ENCODE measurements at regions of chr11 and their contacts with region 1.

Region 1: GRCh38 chr11:25048632-25049031 is 551.8 kb downstream of the LUZP2 start:
- DNase-seq: no peak
- H3K4me3 ChIP-seq: no peak overlapping the region
- CTCF ChIP-seq: no peak
- POLR2A ChIP-seq: no peak

Region 2: GRCh38 chr11:24543786-24544185 is 504.8 kb before region 1 on chr11:
- intact Hi-C with region 1: loop called (anchors 10 kb)
- DNase-seq: no peak
- H3K4me3 ChIP-seq: no peak overlapping the region
- CTCF ChIP-seq: no peak
- POLR2A ChIP-seq: no peak

Region 3: GRCh38 chr11:24779791-24780190 is 268.8 kb before region 1 on chr11:
- intact Hi-C with region 1: no loop called
- DNase-seq: no peak
- H3K4me3 ChIP-seq: no peak overlapping the region
- CTCF ChIP-seq: no peak
- POLR2A ChIP-seq: no peak

Region 4: DNA sequence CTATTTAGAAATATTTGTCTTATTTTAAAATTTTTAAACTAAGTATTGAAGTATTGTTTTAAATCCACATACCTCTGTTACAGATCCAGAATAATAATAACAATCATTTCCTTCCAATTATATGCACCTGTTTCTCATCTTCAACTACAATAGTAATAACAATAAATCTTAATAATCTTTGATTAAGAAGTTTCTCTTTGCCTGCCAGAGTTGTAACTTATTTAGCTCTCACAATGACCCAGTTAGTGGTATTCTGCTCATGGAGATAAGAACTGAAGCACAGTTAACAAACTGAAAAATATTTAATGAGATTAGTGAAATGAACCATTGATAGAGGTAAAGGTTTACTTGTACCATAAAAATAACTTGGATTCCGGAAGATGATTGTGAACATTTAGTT is 244.5 kb after region 1 on chr11:
- intact Hi-C with region 1: no loop called
- DNase-seq: no peak
- H3K4me3 ChIP-seq: no peak overlapping the region
- CTCF ChIP-seq: no peak
- POLR2A ChIP-seq: no peak

Measured in lower leg skin (tissue), 4 donors.